OCI-LY7 (cell line): ENCODE measurements at regions of chr18 and their contacts with region 1.

Region 1: DNA sequence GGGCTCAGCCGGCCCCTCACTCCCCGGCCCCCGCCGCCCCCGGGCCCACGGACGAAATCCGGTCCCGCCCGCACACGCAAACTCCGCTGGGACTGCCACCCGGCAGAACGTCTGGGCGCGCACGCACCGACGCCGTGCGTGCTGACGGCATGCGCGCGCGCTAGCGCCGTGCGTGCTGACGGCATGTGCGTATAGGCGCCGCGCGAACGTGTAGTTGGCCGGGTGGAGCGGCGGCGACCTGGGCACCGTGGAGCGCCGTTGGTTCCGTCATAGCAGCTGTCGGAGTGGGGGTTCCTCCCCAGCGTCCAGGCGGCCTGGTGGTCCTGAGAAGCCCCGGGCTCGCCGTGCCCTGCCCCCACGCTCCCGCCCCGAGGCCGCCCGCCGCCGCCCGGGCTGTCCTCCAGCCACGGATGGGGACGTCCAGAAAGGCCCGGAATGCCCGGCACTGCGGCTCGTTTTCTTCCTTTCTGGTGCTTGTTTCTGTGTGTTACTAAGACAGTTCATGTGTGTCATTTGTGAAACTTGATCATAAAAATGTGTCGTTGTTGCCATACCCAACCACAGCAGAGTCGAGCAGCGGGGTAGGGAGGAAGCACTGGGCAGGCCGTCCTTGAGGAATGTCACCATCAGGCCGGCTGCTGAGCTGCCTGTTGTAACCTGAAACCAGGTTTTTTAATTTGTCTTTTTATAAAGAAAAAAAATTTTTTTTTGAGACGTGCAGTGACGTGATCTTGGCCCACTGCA is at the start of gene TXNL4A:
- DNase-seq: peak; percentile 86
- H3K4me3 ChIP-seq: peak within 1 kb of the TSS; percentile 98
- H3K27ac ChIP-seq: peak within 1 kb of the TSS; percentile 78
- H3K4me1 ChIP-seq: peaks cover 12% of the 10 kb centered on the region
- CTCF ChIP-seq: no peak
- total RNA-seq, gene TXNL4A: 44.7 and 45.9 TPM in 2 replicates

Region 2: DNA sequence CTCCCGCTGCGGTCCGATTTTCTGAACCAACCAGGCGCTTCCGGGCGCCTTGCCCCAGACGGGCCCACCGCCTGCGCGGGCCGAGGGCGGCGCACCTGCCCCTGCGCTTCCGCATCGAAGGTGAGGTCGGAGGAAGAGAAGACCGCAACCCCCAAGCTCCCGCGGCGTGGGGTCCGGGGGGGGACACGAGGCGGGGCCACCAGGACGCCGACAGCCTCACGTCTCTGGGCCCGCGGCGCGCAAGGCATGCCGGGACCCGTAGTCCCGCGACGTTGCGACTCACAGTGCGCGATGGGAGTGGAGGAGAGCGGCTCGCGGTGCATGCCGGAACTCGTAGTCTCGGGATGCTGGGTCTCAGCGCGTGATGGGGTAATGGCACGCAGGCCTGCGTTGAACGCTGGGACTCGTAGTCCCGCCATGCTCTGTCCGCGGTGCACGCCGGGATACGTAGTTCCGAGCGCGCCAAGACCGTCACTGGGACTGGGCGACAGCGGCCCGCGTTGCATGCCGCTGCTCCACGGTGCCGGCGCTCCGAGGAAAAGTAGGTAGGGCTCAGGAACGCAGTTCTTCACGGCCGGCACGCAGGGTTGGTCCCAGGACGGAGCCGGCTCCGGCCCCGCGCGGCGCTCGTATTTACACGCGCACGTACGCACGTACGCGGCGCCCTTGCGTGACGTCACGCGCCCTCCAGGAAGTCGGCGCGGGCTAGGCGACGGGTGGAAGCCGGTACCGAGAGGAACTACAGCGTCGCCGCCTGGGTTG is 309.3 kb before region 1 on chr18 and contains the start of gene CTDP1:
- CTCF ChIA-PET with region 1: no interaction called
- POLR2A ChIA-PET with region 1: interaction called, 3 read pairs
- intact Hi-C with region 1: loop called (anchors 2 kb)
- DNase-seq: peak; percentile 96
- H3K4me3 ChIP-seq: peak within 1 kb of the TSS; percentile 80
- H3K27ac ChIP-seq: peak within 1 kb of the TSS; percentile 74
- H3K4me1 ChIP-seq: peaks cover 26% of the 10 kb centered on the region
- CTCF ChIP-seq: no peak
- total RNA-seq, gene CTDP1: 9.6 and 11.9 TPM in 2 replicates

Region 3: DNA sequence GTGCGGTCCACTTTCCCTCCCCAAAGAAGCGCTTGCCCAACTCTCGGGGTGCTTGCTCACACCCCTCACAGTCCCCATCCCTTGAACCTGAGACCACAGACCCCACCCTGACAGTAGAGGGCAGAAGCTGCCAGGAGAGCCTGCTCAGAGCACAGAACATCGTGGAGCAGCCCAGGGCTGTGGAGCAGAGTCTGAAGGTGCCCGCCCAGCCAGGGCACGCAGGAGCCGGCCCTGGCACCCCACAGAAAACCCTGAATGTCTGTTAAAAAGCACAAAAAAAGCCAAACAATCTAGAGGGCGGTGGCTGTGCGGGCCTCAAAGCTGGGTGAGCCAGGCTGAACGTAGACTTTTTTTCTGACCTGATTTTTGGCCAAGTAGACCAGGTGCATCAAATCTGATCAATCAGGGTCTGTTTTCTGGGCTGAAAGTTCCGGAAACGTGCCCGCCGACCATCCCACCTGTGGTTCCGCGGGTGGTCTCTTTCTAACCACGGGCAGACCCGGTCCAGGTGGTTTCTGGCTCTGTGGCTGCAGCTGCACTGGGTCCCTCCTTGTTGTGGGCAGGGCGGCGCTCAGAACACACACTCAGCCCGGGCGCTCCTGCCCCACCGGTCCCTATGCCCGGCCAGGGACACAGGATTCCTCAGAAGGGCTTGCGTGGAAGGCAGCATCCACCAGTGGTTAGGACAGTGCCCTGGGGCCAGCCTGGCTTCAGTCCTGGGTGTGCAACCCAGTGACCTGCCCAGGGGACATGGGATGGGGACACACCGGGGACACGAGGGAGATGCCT is 103.5 kb before region 1 on chr18:
- CTCF ChIA-PET with region 1: no interaction called
- POLR2A ChIA-PET with region 1: no interaction called
- intact Hi-C with region 1: no loop called
- DNase-seq: peak; percentile 28
- H3K4me3 ChIP-seq: no peak overlapping the region
- H3K27ac ChIP-seq: no peak overlapping the region
- H3K4me1 ChIP-seq: peaks cover 7% of the 10 kb centered on the region
- CTCF ChIP-seq: peak; percentile 53

Region 4: GRCh38 chr18:79949697-79950487 is 38.7 kb before region 1 on chr18:
- CTCF ChIA-PET with region 1: no interaction called
- POLR2A ChIA-PET with region 1: no interaction called
- intact Hi-C with region 1: loop called (anchors 1 kb)
- DNase-seq: peak; percentile 76
- H3K4me3 ChIP-seq: peak overlapping the region; percentile 77
- H3K27ac ChIP-seq: peak overlapping the region; percentile 76
- H3K4me1 ChIP-seq: peaks cover 24% of the 10 kb centered on the region
- CTCF ChIP-seq: no peak